Endothelial cell of umbilical vein (primary cell): ENCODE measurements at regions of chr6 and their contacts with region 1.

Region 1: GRCh38 chr6:145963216-145964068 is 716 bp downstream of the SHPRH start:
- DNase-seq: peak; percentile 68
- H3K4me3 ChIP-seq: peak overlapping the region; percentile 73 to 78 (median 77)
- H3K27ac ChIP-seq: peak overlapping the region; percentile 66
- H3K4me1 ChIP-seq: peaks cover 11% of the 10 kb centered on the region
- H3K27me3 ChIP-seq: no peaks in the 10 kb centered on the region
- CTCF ChIP-seq: no peak
- POLR2A ChIP-seq: no peak

Region 2: GRCh38 chr6:145814501-145815308 is 148.7 kb before region 1 on chr6 and contains the start of gene FBXO30:
- CTCF ChIA-PET with region 1: no interaction called
- POLR2A ChIA-PET with region 1: no interaction called
- dilution Hi-C with region 1: no loop called
- intact Hi-C with region 1: loop called (anchors 2 kb)
- DNase-seq: peak; percentile 95
- H3K4me3 ChIP-seq: peak within 1 kb of the TSS; percentile 56 to 95 (median 90)
- H3K27ac ChIP-seq: peak within 1 kb of the TSS; percentile 83
- H3K4me1 ChIP-seq: peaks cover 28% of the 10 kb centered on the region
- H3K27me3 ChIP-seq: no peaks in the 10 kb centered on the region
- CTCF ChIP-seq: no peak
- POLR2A ChIP-seq: peak; percentile 71
- total RNA-seq, gene FBXO30: 10.4 and 11.1 TPM in 2 replicates

Region 3: GRCh38 chr6:145977881-145978280 is 14.4 kb after region 1 on chr6:
- CTCF ChIA-PET with region 1: no interaction called
- POLR2A ChIA-PET with region 1: no interaction called
- dilution Hi-C with region 1: no loop called
- intact Hi-C with region 1: no loop called
- DNase-seq: no peak
- H3K4me3 ChIP-seq: no peak overlapping the region
- H3K27ac ChIP-seq: no peak overlapping the region
- H3K4me1 ChIP-seq: no peaks in the 10 kb centered on the region
- H3K27me3 ChIP-seq: no peaks in the 10 kb centered on the region
- CTCF ChIP-seq: no peak
- POLR2A ChIP-seq: no peak

Region 4: GRCh38 chr6:146183831-146184230 is 220.4 kb after region 1 on chr6:
- CTCF ChIA-PET with region 1: no interaction called
- POLR2A ChIA-PET with region 1: no interaction called
- dilution Hi-C with region 1: no loop called
- intact Hi-C with region 1: no loop called
- DNase-seq: no peak
- H3K4me3 ChIP-seq: no peak overlapping the region
- H3K27ac ChIP-seq: no peak overlapping the region
- H3K4me1 ChIP-seq: no peaks in the 10 kb centered on the region
- H3K27me3 ChIP-seq: no peaks in the 10 kb centered on the region
- CTCF ChIP-seq: no peak
- POLR2A ChIP-seq: no peak

Region 5: GRCh38 chr6:146289816-146290588 is 326.6 kb after region 1 on chr6:
- CTCF ChIA-PET with region 1: no interaction called
- POLR2A ChIA-PET with region 1: no interaction called
- dilution Hi-C with region 1: no loop called
- intact Hi-C with region 1: loop called (anchors 10 kb)
- DNase-seq: peak; percentile 79
- H3K4me3 ChIP-seq: no peak overlapping the region
- H3K27ac ChIP-seq: peak overlapping the region; percentile 64
- H3K4me1 ChIP-seq: peaks cover 15% of the 10 kb centered on the region
- H3K27me3 ChIP-seq: no peaks in the 10 kb centered on the region
- CTCF ChIP-seq: no peak
- POLR2A ChIP-seq: no peak

Region 6: GRCh38 chr6:146770965-146771735 is 807.7 kb after region 1 on chr6:
- CTCF ChIA-PET with region 1: no interaction called
- POLR2A ChIA-PET with region 1: no interaction called
- dilution Hi-C with region 1: no loop called
- intact Hi-C with region 1: loop called (anchors 10 kb)
- DNase-seq: peak; percentile 70
- H3K4me3 ChIP-seq: no peak overlapping the region
- H3K27ac ChIP-seq: peak overlapping the region; percentile 33
- H3K4me1 ChIP-seq: peaks cover 7% of the 10 kb centered on the region
- H3K27me3 ChIP-seq: no peaks in the 10 kb centered on the region
- CTCF ChIP-seq: no peak
- POLR2A ChIP-seq: peak; percentile 40